Activated CD4-positive, alpha-beta T cell treated with anti-CD3 and anti-CD28 coated beads, Interleukin-2, amount 10 ng/mL, durations not matched to agents 24 days and 14 days (primary cell): ENCODE measurements at regions of chr7 and their contacts with region 1.

Region 1: GRCh38 chr7:148584154-148584827 is 6.3 kb upstream of the C7orf33 start:
- DNase-seq: no peak
- H3K4me3 Mint-ChIP-seq: peak overlapping the region; percentile 20
- H3K27ac Mint-ChIP-seq: peak overlapping the region; percentile 12
- H3K4me1 Mint-ChIP-seq: peaks cover 18% of the 10 kb centered on the region
- H3K27me3 Mint-ChIP-seq: peaks cover 11% of the 10 kb centered on the region

Region 2: GRCh38 chr7:148503875-148504487 is 80.3 kb before region 1 on chr7:
- intact Hi-C with region 1: loop called (anchors 1 kb)
- DNase-seq: peak; percentile 64
- H3K4me3 Mint-ChIP-seq: no peak overlapping the region
- H3K27ac Mint-ChIP-seq: no peak overlapping the region
- H3K4me1 Mint-ChIP-seq: peaks cover 8% of the 10 kb centered on the region
- H3K27me3 Mint-ChIP-seq: peaks cover 21% of the 10 kb centered on the region

Region 3: DNA sequence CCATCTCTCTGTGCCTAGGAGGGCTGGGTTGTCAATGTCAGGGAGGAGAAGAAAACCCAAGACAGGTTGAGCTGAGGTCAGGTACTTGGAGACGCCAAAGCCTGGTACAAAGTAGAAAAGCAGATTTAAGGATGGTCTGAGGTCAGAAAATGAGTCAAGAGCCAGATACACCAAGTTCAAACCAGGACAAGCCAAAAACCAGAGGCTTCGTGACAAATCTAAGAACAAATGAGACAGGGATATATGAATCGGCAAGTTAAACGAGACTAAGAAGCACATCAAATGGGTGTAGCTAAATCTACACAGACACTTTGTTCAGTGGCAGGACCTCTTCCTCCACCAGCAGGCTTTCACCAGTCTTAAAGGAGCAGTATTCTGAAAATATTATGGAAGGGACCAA is 40.4 kb after region 1 on chr7:
- intact Hi-C with region 1: loop called (anchors 5 kb)
- DNase-seq: no peak
- H3K4me3 Mint-ChIP-seq: no peak overlapping the region
- H3K27ac Mint-ChIP-seq: no peak overlapping the region
- H3K4me1 Mint-ChIP-seq: peaks cover 31% of the 10 kb centered on the region
- H3K27me3 Mint-ChIP-seq: peaks cover 9% of the 10 kb centered on the region